ENCODE measurements at regions of chr16 and their contacts with region 1.

Region 1: GRCh38 chr16:75288596-75289120 is 37.2 kb upstream of the BCAR1 start:
- DNase-seq: no peak
- H3K4me3 ChIP-seq: no peak overlapping the region
- H3K27ac ChIP-seq: peak overlapping the region; percentile 72
- H3K4me1 ChIP-seq: peaks cover 27% of the 10 kb centered on the region
- H3K27me3 ChIP-seq: no peaks in the 10 kb centered on the region
- CTCF ChIP-seq: no peak
- POLR2A ChIP-seq: no peak

Region 2: DNA sequence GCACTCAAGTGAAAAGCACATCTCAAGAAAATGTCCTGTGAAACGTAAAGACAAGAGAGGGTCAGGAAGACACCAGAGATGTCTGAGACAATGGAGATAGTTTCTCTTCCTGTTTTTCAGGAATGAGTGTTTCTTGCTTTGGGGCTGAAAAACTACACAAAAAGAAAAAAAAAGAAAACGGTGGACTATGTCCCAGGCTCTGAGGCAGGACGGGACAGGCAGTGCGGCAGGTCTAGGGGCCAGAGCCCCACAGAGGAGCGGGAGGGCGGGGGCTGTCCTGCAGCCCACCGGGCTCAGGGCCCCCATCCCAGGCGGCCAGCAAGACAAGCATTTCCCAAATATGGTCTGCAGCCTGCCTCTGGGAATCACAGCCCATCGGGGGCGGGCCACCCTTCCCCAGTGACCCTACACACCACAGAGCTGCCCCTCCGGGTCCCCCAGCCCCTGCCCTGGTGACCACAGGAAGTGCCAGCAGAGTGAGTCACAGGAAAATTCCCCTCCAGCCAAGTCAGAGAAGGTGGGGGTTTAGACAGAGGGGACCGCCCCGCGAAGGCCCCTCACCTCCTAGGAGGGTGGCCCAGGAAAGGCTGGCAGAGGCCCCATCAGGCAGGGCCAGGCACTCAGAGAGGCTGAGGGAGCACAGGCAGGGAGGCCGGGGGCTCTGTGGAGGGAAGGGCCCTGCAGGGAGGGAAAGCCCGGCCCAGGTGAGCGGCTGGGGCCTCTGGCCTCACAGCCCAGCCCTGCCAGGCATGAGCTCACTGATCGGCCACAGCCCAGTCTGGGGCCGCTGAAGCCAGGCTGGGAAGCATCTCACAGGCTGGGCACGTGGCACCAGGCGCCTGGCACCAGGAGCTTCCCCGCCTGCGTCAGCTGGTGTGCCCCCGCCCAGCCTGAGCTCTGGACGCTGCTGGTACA is 43.6 kb before region 1 on chr16:
- CTCF ChIA-PET with region 1: no interaction called
- POLR2A ChIA-PET with region 1: no interaction called
- dilution Hi-C with region 1: no loop called
- intact Hi-C with region 1: loop called (anchors 1 kb)
- DNase-seq: peak; percentile 94
- H3K4me3 ChIP-seq: peak overlapping the region in 1 of 3 experiments; percentile 5
- H3K27ac ChIP-seq: peak overlapping the region; percentile 92
- H3K4me1 ChIP-seq: peaks cover 66% of the 10 kb centered on the region
- H3K27me3 ChIP-seq: no peaks in the 10 kb centered on the region
- CTCF ChIP-seq: no peak
- POLR2A ChIP-seq: peak; percentile 74

Region 3: GRCh38 chr16:75251280-75252048 is 37.2 kb before region 1 on chr16 and contains the start of gene BCAR1:
- CTCF ChIA-PET with region 1: interaction called, 3 read pairs
- POLR2A ChIA-PET with region 1: no interaction called
- dilution Hi-C with region 1: no loop called
- intact Hi-C with region 1: loop called (anchors 1 kb)
- DNase-seq: peak; percentile 89
- H3K4me3 ChIP-seq: peak within 1 kb of the TSS; percentile 50 to 83 (median 80)
- H3K27ac ChIP-seq: peak within 1 kb of the TSS; percentile 92
- H3K4me1 ChIP-seq: peaks cover 80% of the 10 kb centered on the region
- H3K27me3 ChIP-seq: no peaks in the 10 kb centered on the region
- CTCF ChIP-seq: no peak
- POLR2A ChIP-seq: peak; percentile 73
- total RNA-seq, gene BCAR1: 237 and 267 TPM in 2 replicates

Region 4: GRCh38 chr16:75272097-75272551 is 16.5 kb before region 1 on chr16:
- CTCF ChIA-PET with region 1: interaction called, 9 read pairs
- POLR2A ChIA-PET with region 1: no interaction called
- dilution Hi-C with region 1: no loop called
- intact Hi-C with region 1: loop called (anchors 2 kb)
- DNase-seq: no peak
- H3K4me3 ChIP-seq: no peak overlapping the region
- H3K27ac ChIP-seq: no peak overlapping the region
- H3K4me1 ChIP-seq: peaks cover 22% of the 10 kb centered on the region
- H3K27me3 ChIP-seq: no peaks in the 10 kb centered on the region
- CTCF ChIP-seq: no peak
- POLR2A ChIP-seq: no peak